ENCODE measurements at regions of chr22 and their contacts with region 1.

Region 1: DNA sequence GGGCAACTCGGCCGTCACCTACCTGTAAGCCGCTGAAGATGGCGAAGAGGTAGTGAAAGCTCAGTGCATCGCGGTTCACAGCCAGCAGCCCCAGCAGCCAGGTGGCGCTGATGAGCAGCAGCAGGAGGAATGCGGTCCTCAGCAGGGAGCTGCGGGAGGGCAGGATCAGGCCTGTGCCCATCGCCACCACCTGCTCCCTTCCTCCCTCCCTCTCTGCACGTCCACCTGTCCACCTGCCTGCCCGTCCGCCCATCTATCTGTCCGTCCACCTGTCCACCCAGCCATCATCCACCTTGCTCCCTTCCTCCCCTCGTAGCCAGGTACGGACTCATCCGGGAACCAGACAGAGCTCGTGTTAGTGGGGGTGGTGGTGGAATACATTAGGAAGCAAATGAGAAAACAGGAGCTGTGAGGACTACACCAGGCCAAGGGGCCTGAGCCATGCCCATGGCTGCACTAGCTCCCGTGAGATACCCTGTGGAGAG is 32.2 kb downstream of the TRMU start:
- DNase-seq: no peak
- H3K4me3 ChIP-seq: no peak overlapping the region
- H3K27me3 ChIP-seq: no peaks in the 10 kb centered on the region
- CTCF ChIP-seq: peak; percentile 97

Region 2: GRCh38 chr22:46355371-46355995 is 12.3 kb before region 1 on chr22:
- CTCF ChIA-PET with region 1: interaction called, 15 read pairs
- POLR2A ChIA-PET with region 1: no interaction called
- DNase-seq: no peak
- H3K4me3 ChIP-seq: no peak overlapping the region
- H3K27me3 ChIP-seq: no peaks in the 10 kb centered on the region
- CTCF ChIP-seq: peak; percentile 87

Region 3: DNA sequence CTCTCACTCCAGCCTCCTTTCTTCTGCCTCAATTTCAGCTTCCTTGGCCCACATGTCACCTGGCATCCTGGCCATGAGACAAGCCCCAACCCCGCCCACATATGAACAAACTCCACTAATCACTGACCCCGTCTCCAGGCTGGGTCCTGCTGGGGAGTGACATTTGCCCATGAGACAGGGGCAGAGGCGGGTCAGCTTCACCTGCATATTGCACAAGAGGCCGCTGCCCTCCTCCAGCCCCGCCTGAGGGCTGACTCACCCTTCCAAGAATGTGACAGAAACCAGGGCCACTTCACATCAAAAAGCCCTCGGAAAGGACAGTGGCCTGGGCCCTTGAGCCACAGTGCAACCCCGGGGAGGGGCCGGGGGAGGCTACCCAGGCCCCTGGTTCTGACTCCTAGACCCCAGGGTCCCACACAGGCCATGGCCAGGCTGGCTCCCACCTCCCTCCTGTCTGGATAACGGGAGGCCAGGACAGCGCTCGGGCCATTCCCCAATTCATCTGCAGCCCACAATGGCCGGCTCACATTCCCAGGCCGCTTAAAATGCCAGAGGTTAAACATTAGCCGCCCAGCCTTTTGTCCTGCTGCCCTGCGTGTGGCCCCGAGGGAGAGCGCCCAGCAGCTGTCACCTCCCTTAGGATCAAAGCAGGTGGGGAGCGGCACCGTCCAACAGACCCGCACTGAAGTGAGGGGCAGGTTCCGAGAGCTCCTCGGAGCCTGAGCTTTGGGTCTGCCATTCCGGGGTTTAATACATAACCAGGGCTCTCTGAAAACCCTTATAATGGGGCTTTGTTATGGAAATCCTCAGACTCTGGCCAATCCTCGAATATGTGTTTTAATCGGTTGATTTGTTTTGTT is 10.0 kb after region 1 on chr22:
- CTCF ChIA-PET with region 1: interaction called, 24 read pairs
- POLR2A ChIA-PET with region 1: no interaction called
- DNase-seq: no peak
- H3K4me3 ChIP-seq: no peak overlapping the region
- H3K27me3 ChIP-seq: no peaks in the 10 kb centered on the region
- CTCF ChIP-seq: no peak

Region 4: DNA sequence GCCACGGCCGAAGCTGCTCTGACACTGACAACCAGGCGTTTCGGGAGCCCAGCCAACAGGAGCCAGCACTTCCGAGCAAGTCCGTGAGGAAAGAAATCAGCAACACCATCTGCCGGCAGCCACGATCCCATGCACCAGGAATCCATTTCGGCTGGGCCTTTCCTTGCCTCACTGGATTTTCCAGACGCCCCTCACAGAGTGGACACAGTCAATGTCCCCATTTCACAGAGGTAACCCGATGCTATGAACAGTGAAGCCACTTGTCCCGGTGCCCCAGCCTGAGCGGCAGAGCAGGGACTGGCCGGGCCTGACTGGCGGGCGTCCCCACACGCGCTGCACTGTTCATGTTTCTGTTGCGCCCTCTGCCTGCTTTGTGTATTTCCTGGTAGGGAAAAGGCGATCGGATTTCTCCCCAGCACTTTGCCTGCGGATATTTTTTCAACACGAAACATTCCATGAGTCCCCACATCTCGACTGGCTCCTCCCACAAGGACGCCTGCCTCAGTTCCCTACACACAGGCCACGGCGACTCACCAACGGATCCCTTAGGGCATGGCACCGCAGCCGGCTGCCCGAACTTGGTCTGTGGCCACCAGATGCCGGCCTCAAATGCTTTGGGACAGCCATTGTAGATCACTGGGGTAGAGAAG is 23.0 kb after region 1 on chr22:
- CTCF ChIA-PET with region 1: interaction called, 12 read pairs
- POLR2A ChIA-PET with region 1: no interaction called
- DNase-seq: peak; percentile 6
- H3K4me3 ChIP-seq: no peak overlapping the region
- H3K27me3 ChIP-seq: no peaks in the 10 kb centered on the region
- CTCF ChIP-seq: peak; percentile 71

Region 5: GRCh38 chr22:46542011-46542985 is 174.5 kb after region 1 on chr22:
- CTCF ChIA-PET with region 1: interaction called, 211 read pairs
- POLR2A ChIA-PET with region 1: no interaction called
- DNase-seq: no peak
- H3K4me3 ChIP-seq: no peak overlapping the region
- H3K27me3 ChIP-seq: no peaks in the 10 kb centered on the region
- CTCF ChIP-seq: peak; percentile 99

Region 6: DNA sequence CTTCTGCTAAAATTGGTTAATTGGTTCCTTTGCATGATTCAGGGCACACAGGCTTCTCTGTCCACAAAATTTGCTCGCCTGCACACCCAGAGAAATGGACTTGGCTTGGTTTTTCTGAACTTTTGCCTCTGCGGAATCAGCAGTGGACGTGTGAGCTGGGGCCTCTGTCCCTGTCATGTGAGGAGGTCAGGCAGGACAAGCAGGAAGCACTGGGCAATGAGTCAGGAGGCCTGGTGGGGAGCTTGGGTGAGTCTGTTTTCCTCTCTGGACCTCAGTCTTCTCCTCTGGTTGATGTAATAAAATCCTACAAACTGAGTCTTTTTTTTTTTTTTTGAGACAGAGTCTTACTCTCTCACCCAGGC is 180.1 kb after region 1 on chr22:
- CTCF ChIA-PET with region 1: interaction called, 211 read pairs
- POLR2A ChIA-PET with region 1: no interaction called
- DNase-seq: peak; percentile 81
- H3K4me3 ChIP-seq: no peak overlapping the region
- H3K27me3 ChIP-seq: no peaks in the 10 kb centered on the region
- CTCF ChIP-seq: no peak